Breast epithelium (tissue), 4 donors: ENCODE measurements at regions of chr19 and their contacts with region 1.

Region 1: DNA sequence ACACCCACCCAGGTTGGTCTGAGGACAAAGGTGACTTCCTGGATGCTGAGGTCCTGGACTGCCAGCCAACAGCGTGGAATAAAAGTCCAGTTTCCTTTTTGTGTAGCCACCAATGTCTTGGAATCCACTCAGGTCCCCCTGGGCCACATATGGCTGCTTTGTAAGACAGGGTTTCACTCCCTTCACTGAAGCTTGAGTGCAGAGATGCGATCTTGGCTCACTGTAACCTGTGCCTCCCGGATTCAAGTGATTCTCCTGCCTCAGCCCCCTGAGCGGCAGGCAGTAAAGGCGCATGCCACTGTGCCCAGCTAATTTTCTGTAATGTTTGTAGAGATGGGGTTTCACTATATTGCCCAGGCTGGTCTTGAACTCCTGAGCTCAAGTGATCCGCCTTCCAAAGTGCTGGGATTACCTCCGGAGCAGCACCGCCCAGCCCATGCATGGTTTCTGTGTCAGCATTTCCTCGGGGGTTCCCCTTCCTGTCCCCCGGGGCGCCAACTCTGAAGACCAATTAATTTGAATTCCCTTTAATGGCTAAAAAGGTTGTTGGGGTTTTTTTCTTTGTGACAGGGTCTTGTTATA is 17.5 kb downstream of the KANK2 start:
- DNase-seq: no peak
- H3K4me3 ChIP-seq: no peak overlapping the region
- H3K27ac ChIP-seq: peak overlapping the region in 1 of 2 donors; percentile 75
- H3K4me1 ChIP-seq: no peaks in the 10 kb centered on the region
- H3K27me3 ChIP-seq: no peaks in the 10 kb centered on the region
- CTCF ChIP-seq: no peak
- POLR2A ChIP-seq: no peak

Region 2: GRCh38 chr19:10878253-10878652 is 301.6 kb before region 1 on chr19:
- intact Hi-C with region 1: loop called (anchors 2 kb)
- DNase-seq: no peak
- H3K4me3 ChIP-seq: no peak overlapping the region
- H3K27ac ChIP-seq: peak overlapping the region in 1 of 2 donors; percentile 5
- H3K4me1 ChIP-seq: no peaks in the 10 kb centered on the region
- H3K27me3 ChIP-seq: no peaks in the 10 kb centered on the region
- CTCF ChIP-seq: no peak
- POLR2A ChIP-seq: no peak